Activated CD4-positive, alpha-beta memory T cell treated with anti-CD3 and anti-CD28 coated beads, Interleukin-2, amount 10 ng/mL, durations not matched to agents 7 days and 5 days (primary cell): ENCODE measurements at regions of chr2 and their contacts with region 1.

Region 1: GRCh38 chr2:239275044-239275685 is 125.7 kb downstream of the HDAC4 start:
- DNase-seq: peak; percentile 90
- H3K4me3 Mint-ChIP-seq: peak overlapping the region; percentile 63
- H3K27ac Mint-ChIP-seq: peak overlapping the region; percentile 92
- H3K4me1 Mint-ChIP-seq: peaks cover 83% of the 10 kb centered on the region
- H3K27me3 Mint-ChIP-seq: peaks cover 14% of the 10 kb centered on the region

Region 2: DNA sequence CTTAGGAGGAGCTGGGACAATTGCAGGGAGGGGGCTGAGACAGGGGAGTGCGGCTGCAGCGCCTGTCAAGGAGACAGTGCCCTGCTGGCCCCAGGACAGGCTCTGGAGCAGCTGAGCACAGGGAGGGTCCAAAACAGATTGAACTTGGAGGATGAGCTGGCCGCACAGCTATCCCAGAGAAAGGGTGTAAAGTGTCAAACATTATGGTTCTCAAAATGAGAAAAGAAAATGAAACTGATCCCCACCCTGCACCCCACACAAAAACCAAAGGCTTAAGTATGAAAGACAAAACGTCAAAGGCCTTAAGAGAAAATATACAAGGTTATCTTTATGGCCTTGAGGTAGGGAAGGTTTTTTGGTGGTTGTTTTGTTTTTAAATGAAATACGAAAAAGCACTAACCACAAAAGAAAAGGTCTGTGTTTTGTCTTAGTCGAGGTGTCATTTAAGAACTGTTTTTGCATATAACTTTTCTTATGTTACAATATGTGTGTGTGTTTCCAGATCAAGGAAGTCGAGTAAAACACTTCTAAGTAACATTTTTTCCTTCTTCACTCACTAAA is 13.9 kb after region 1 on chr2:
- CTCF ChIA-PET with region 1: interaction called, 11 read pairs
- POLR2A ChIA-PET with region 1: interaction called, 55 read pairs
- DNase-seq: peak; percentile 56
- H3K4me3 Mint-ChIP-seq: peak overlapping the region; percentile 75
- H3K27ac Mint-ChIP-seq: peak overlapping the region; percentile 97
- H3K4me1 Mint-ChIP-seq: peaks cover 74% of the 10 kb centered on the region
- H3K27me3 Mint-ChIP-seq: peaks cover 18% of the 10 kb centered on the region

Region 3: DNA sequence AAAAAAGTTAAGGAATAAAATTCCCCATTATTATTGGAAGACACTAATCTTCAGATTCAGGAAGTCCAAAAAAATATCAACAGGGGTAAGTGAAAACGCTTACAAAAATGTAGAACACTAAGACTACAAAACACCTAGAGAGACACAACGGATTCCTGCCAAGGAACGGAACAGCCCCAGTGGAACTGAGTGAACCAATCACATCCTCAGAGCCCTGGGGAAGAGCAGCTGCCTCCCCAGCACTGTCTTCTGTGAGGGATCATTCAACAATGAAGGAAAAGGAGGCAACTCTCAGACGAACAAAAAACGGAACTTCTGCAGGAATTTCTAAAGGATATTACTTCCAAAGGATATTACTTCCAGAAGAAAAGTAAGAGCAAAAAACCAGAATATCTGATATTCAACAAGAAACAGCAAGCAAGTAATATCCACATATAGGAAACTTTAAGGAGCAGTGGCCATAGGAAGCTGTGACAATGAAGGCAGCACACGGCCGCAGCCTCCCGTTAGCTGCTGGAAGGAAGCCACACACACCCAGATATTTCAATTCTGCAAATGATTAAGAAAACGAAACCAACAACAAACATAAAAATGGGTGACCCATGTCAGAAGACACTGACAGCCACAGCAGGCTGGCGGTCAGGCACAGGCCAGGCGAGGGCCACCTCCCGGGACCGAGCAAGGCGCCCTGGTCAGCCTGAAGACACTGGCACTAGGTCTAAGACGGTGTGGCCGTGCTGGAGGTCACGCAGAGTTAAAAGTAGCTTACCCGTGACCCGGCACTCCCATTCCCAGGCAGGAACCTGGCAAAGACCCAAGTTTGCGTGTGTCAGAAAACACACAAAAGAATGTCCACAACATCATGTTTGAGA is 43.9 kb after region 1 on chr2:
- CTCF ChIA-PET with region 1: interaction called, 3 read pairs
- POLR2A ChIA-PET with region 1: interaction called, 25 read pairs
- DNase-seq: peak; percentile 31
- H3K4me3 Mint-ChIP-seq: peak overlapping the region; percentile 63
- H3K27ac Mint-ChIP-seq: peak overlapping the region; percentile 82
- H3K4me1 Mint-ChIP-seq: peaks cover 77% of the 10 kb centered on the region
- H3K27me3 Mint-ChIP-seq: no peaks in the 10 kb centered on the region

Region 4: DNA sequence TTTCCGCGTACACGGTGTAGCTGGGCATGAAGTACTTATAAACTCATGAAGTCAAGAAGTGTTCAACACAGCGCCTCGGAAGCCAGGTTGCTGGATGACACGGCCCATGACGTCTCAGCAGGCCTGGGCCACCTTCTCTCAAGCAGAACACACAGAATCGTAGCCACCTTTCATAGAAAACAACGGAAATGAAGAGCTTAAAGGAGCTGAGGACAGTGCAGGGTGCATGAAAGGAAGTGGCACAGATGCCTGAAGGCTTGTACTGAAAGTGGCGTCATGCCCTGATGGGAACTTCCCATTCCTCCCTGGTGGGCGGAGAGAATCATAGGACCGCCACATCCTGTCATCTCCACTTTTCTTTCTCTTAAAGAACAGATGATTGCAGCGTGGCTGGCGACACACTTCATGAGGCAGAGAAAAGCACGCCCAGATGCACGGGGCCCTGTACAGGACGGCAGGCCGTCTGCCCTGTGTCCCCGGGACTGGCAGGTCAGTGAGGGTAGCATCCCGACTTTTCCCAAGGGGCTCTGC is 94.5 kb after region 1 on chr2:
- CTCF ChIA-PET with region 1: interaction called, 10 read pairs
- POLR2A ChIA-PET with region 1: no interaction called
- DNase-seq: peak; percentile 81
- H3K4me3 Mint-ChIP-seq: peak overlapping the region; percentile 63
- H3K27ac Mint-ChIP-seq: no peak overlapping the region
- H3K4me1 Mint-ChIP-seq: peaks cover 10% of the 10 kb centered on the region
- H3K27me3 Mint-ChIP-seq: no peaks in the 10 kb centered on the region

Region 5: GRCh38 chr2:239401067-239401880 is 126.1 kb after region 1 on chr2:
- CTCF ChIA-PET with region 1: no interaction called
- POLR2A ChIA-PET with region 1: interaction called, 22 read pairs
- DNase-seq: peak; percentile 99
- H3K4me3 Mint-ChIP-seq: peak overlapping the region; percentile 85
- H3K27ac Mint-ChIP-seq: peak overlapping the region; percentile 95
- H3K4me1 Mint-ChIP-seq: peaks cover 38% of the 10 kb centered on the region
- H3K27me3 Mint-ChIP-seq: peaks cover 14% of the 10 kb centered on the region